Heart left ventricle (tissue), 16 donors: ENCODE measurements at regions of chr2 and their contacts with region 1.

Region 1: DNA sequence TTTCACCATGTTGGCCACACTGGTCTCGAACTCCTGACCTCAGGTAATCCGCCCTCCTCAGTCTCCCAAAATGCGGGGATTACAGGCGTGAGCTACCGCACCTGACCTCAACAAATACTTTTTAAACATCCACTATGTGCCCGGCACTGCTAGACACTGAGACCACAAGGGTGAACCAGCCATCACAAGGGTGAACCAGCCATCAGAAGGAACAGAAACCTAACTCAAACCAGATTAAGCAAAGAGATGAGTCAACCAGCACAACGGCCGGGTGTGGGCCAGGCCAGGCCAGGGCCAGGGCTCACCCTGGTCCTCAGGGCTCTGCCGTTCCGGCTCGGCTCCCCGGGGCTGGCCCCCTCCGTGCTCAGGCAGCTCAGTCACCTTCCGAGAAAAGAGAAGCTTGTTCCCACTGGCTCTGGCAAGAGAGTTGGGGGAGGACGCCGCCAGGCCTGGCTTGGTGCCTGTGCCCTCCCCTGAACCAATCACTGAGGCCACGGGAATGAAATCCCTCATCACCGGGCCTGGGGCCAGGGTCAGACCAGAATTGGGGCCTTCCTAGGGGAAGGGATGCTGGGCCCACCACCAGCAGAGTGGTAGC is 4.4 kb downstream of the TEX44 start:
- DNase-seq: peak; percentile 38 to 79 (median 56)
- ATAC-seq: peak; percentile 56 to 75 (median 69)
- H3K4me3 ChIP-seq: no peak overlapping the region
- H3K27ac ChIP-seq: peak overlapping the region in 3 of 12 donors; percentile 3 to 69 (median 45)
- H3K4me1 ChIP-seq: peaks cover 0 to 15% (median 6%) of the 10 kb centered on the region in 12 donors
- H3K27me3 ChIP-seq: no peaks in the 10 kb centered on the region
- CTCF ChIP-seq: no peak
- POLR2A ChIP-seq: no peak

Region 2: GRCh38 chr2:230885463-230886130 is 711.5 kb before region 1 on chr2:
- intact Hi-C with region 1: no loop called
- DNase-seq: no peak
- ATAC-seq: peak in 2 of 4 donors; percentile 22 to 37
- H3K4me3 ChIP-seq: no peak overlapping the region
- H3K27ac ChIP-seq: no peak overlapping the region
- H3K4me1 ChIP-seq: peaks cover 0 to 9% (median 0%) of the 10 kb centered on the region in 12 donors
- H3K27me3 ChIP-seq: no peaks in the 10 kb centered on the region
- CTCF ChIP-seq: no peak
- POLR2A ChIP-seq: no peak

Region 3: DNA sequence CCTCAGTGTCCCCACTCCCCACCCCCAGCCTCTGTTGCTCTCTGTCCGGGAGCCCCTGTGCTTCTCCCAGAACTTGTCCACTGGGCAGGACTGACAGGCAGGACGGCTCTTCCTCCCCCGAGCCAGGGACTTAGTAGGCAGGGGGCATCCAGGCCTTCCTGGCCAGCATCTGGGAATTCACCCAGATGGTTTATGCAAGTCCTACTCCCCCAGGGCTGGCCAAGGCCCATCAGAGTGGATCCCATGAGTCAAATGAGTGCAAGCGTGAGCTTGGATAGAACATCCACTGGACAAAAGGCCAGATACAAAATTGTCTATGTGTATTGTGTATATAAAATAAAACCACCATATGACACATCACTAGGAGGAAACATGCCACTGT is 74.3 kb before region 1 on chr2:
- intact Hi-C with region 1: loop called in 8 of 10 experiments (anchors 5 to 10 kb)
- DNase-seq: no peak
- ATAC-seq: no peak
- H3K4me3 ChIP-seq: no peak overlapping the region
- H3K27ac ChIP-seq: no peak overlapping the region
- H3K4me1 ChIP-seq: peaks cover 0 to 18% (median 0%) of the 10 kb centered on the region in 12 donors
- H3K27me3 ChIP-seq: no peaks in the 10 kb centered on the region
- CTCF ChIP-seq: no peak
- POLR2A ChIP-seq: no peak